Testis (tissue), 5 donors: ENCODE measurements at regions of chr9 and their contacts with region 1.

Region 1: DNA sequence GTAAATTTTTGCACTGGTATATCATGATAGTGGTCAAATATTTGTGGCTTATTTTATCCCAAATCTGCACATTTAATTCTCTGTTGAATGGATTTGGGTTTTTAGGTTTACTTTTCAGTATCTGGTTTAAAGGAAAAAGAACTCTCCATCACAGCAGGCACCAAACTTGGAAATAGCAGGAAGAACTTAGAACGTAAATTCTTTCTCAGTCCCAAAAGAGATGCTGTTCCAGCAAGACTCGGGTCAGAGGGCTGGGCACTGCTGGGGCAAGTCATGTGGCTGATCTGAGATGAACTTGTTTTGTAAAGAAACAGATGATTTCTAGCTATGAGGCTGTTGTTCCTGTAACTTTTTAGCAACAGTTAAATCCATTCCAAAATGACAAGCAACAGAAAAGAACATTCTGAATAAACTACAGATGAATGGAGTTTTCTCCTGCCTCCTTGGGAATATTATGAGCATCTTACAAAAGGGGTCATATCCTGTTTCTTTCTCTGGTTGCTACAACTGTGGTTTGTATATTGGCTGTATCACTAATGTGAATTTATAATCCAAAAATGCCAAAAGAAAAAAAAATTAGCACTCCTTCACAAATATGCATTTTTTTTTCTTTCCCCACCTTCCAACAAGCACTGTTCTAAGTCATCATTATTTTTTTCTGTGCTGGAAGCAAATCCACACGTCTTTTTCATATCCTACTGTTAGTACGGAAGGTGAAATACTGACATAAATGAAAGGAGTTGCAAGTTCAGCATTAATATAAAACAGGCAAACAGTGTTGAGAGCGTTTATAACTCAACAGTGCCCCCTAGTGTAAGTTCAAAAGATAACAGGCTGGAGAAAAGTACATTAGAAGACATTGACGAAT is 31.1 kb downstream of the OR2K2 start:
- DNase-seq: peak; percentile 69
- H3K4me3 ChIP-seq: no peak overlapping the region
- H3K27ac ChIP-seq: peak overlapping the region in 1 of 2 donors; percentile 62
- H3K4me1 ChIP-seq: no peaks in the 10 kb centered on the region
- H3K27me3 ChIP-seq: no peaks in the 10 kb centered on the region
- CTCF ChIP-seq: peak; percentile 85 to 93 (median 91)
- POLR2A ChIP-seq: no peak

Region 2: GRCh38 chr9:110638381-110638954 is 660.5 kb before region 1 on chr9:
- intact Hi-C with region 1: loop called (anchors 10 kb)
- DNase-seq: no peak
- H3K4me3 ChIP-seq: no peak overlapping the region
- H3K27ac ChIP-seq: no peak overlapping the region
- H3K4me1 ChIP-seq: no peaks in the 10 kb centered on the region
- H3K27me3 ChIP-seq: no peaks in the 10 kb centered on the region
- CTCF ChIP-seq: peak in 1 of 3 experiments; percentile 50
- POLR2A ChIP-seq: no peak

Region 3: DNA sequence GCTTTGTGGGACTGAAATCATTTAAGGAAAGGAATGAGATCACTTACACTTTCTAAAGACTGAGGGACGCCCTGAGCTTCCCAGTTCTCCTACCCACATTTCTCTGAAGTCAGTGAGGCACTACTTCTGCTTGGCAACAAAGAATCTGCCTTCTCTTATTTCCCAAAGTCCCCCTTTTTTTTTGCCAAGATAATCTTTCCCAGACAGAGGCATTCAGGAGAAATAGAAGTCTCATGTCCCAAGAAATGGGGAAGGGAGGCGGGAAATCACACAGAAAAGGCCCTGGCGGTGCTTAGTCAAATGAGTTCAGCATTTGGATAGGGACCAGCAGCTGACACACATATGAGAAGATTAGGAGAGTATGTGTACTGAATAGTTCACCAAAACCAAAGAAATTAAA is 470.7 kb before region 1 on chr9:
- intact Hi-C with region 1: no loop called
- DNase-seq: peak; percentile 71
- H3K4me3 ChIP-seq: no peak overlapping the region
- H3K27ac ChIP-seq: peak overlapping the region in 1 of 2 donors; percentile 55
- H3K4me1 ChIP-seq: no peaks in the 10 kb centered on the region
- H3K27me3 ChIP-seq: no peaks in the 10 kb centered on the region
- CTCF ChIP-seq: no peak
- POLR2A ChIP-seq: no peak

Region 4: DNA sequence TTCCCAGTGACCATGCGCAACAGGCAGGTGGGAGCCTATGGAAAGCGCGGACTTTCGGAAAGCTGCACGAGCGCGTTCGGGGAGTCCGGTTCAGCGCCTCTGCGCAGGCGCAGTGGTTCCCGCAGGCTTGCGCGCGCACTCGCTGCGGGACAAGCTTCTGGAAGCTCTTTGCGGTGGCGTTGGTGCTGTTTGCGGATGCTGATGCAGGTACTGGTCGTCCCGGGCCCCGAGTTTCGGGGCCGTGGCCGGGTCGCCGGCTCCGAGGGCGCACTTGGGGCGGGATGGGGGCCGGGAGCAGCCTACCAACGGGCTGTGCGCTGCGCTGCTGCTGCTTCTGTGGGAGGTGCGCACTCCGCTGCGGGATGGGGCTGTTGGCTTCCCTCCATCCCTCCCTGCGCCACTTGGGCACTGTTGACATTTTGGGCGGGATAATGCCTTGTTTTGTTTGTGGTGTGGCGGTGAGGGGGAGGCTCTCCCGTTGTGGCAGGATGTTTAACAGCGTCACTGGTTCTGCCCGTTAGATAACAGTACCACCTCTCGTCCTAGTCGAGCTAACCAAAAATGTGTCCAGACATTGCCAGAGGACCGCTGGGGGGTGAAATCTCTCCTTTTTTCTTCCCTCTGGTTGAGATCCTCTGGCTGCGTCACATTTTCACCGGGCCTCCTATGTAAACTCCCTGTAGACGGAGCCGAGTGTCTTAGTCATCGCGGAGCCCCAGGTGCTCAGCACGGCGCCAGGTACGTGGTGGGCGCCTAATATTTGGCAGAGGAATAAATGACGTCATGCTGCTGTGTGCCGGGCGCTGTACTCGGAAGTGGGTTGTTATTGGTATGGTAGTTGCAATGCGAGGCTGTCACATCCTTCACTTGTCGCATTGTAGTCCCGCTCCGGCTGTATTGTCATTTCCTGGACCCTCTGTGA is 226.4 kb after region 1 on chr9 and contains the start of gene ZNF483:
- intact Hi-C with region 1: no loop called
- DNase-seq: peak; percentile 88
- H3K4me3 ChIP-seq: peak within 1 kb of the TSS; percentile 70 to 89
- H3K27ac ChIP-seq: peak within 1 kb of the TSS; percentile 73 to 77
- H3K4me1 ChIP-seq: peaks cover 5% of the 10 kb centered on the region
- H3K27me3 ChIP-seq: no peaks in the 10 kb centered on the region
- CTCF ChIP-seq: no peak
- POLR2A ChIP-seq: no peak
- total RNA-seq, gene ZNF483: 25.1 to 28.6 TPM

Region 5: DNA sequence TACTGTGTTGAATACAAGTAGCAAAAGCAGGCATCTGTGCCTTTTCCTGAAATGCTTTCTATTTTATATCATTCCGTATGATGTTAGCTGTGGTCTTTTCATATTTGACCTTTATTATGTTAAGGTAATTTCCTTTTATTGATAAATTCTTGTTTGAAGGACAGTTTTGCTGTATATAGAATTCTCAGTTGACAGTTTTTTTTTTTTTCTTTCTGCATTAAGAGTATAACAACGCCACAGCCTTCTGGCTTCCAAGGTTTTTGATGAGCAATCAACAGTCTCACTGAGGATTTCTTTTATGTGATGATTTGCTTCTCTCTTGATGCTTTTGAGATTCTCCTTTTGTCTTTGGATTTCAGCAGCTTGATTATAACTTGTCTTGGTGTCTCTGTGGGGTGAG is 249.7 kb after region 1 on chr9:
- intact Hi-C with region 1: no loop called
- DNase-seq: no peak
- H3K4me3 ChIP-seq: no peak overlapping the region
- H3K27ac ChIP-seq: no peak overlapping the region
- H3K4me1 ChIP-seq: no peaks in the 10 kb centered on the region
- H3K27me3 ChIP-seq: no peaks in the 10 kb centered on the region
- CTCF ChIP-seq: no peak
- POLR2A ChIP-seq: no peak